ENCODE measurements at regions of chr19 and their contacts with region 1.

Region 1: GRCh38 chr19:33186431-33187182 is 7.5 kb upstream of the LRP3 start:
- DNase-seq: no peak
- H3K4me3 ChIP-seq: no peak overlapping the region
- H3K27ac ChIP-seq: no peak overlapping the region
- H3K4me1 ChIP-seq: peaks cover 4% of the 10 kb centered on the region
- H3K27me3 ChIP-seq: no peaks in the 10 kb centered on the region
- CTCF ChIP-seq: no peak

Region 2: GRCh38 chr19:32971715-32972540 is 214.7 kb before region 1 on chr19 and contains the starts of genes CEP89 and FAAP24:
- CTCF ChIA-PET with region 1: interaction called, 3 read pairs
- POLR2A ChIA-PET with region 1: no interaction called
- intact Hi-C with region 1: loop called (anchors 10 kb)
- DNase-seq: peak; percentile 99
- H3K4me3 ChIP-seq: peak within 1 kb of the TSS; percentile 72
- H3K27ac ChIP-seq: peak within 1 kb of the TSS; percentile 63
- H3K4me1 ChIP-seq: peaks cover 7% of the 10 kb centered on the region
- H3K27me3 ChIP-seq: no peaks in the 10 kb centered on the region
- CTCF ChIP-seq: no peak
- total RNA-seq, gene CEP89: 38.7 and 47.2 TPM in 2 replicates
- total RNA-seq, gene FAAP24: 10.0 and 11.1 TPM in 2 replicates

Region 3: DNA sequence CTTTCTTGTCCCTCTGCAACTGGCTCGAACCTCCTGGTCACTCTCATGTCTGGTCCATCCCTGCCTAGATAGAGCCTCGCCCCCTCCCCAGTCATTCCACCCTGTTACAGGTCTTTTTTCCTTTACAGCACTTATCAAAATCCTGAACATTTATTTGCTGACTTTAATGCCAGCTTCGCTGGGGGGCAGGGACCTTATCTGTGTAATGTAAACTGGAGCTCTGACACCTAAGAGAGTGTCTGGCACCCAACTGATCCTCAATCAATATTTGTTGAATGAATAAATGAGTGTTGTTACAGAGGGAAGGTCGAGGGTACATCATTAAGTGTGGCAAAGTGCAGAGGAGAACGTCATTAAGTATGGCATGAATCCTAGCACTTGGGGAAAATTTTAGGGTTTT is 197.9 kb before region 1 on chr19:
- CTCF ChIA-PET with region 1: no interaction called
- POLR2A ChIA-PET with region 1: no interaction called
- intact Hi-C with region 1: no loop called
- DNase-seq: no peak
- H3K4me3 ChIP-seq: no peak overlapping the region
- H3K27ac ChIP-seq: no peak overlapping the region
- H3K4me1 ChIP-seq: no peaks in the 10 kb centered on the region
- H3K27me3 ChIP-seq: no peaks in the 10 kb centered on the region
- CTCF ChIP-seq: no peak

Region 4: GRCh38 chr19:33047406-33047805 is 139.2 kb before region 1 on chr19:
- CTCF ChIA-PET with region 1: interaction called, 11 read pairs
- POLR2A ChIA-PET with region 1: no interaction called
- intact Hi-C with region 1: no loop called
- DNase-seq: no peak
- H3K4me3 ChIP-seq: no peak overlapping the region
- H3K27ac ChIP-seq: no peak overlapping the region
- H3K4me1 ChIP-seq: peaks cover under 1% of the 10 kb centered on the region
- H3K27me3 ChIP-seq: no peaks in the 10 kb centered on the region
- CTCF ChIP-seq: no peak

Region 5: DNA sequence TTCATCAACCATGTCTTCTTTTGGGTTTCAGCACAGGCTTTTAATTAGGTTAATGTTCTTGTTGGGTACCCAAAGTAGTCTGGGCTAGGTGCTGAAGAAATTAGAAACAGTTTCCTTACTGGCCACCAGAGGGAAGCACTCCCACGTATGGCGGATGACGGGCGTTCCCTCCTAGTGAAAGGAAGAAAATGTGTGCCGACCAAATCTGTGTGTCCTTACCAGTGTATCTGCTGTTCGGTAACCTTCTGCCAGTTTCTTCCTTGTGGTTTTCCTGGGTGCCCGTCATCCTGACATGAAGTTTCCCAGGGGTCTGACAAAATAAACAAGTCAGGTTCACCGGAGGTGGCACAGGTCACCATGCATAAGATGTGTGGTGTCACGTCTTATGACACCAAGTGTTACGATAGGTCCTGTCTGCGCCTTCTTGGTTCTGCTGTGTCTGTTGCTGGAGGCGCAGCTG is 60.6 kb before region 1 on chr19:
- CTCF ChIA-PET with region 1: interaction called, 17 read pairs
- POLR2A ChIA-PET with region 1: no interaction called
- intact Hi-C with region 1: loop called (anchors 1 kb)
- DNase-seq: peak; percentile 75
- H3K4me3 ChIP-seq: no peak overlapping the region
- H3K27ac ChIP-seq: no peak overlapping the region
- H3K4me1 ChIP-seq: no peaks in the 10 kb centered on the region
- H3K27me3 ChIP-seq: no peaks in the 10 kb centered on the region
- CTCF ChIP-seq: peak; percentile 85

Region 6: GRCh38 chr19:33143897-33144405 is 42.7 kb before region 1 on chr19:
- CTCF ChIA-PET with region 1: interaction called, 16 read pairs
- POLR2A ChIA-PET with region 1: no interaction called
- intact Hi-C with region 1: no loop called
- DNase-seq: peak; percentile 68
- H3K4me3 ChIP-seq: no peak overlapping the region
- H3K27ac ChIP-seq: no peak overlapping the region
- H3K4me1 ChIP-seq: no peaks in the 10 kb centered on the region
- H3K27me3 ChIP-seq: no peaks in the 10 kb centered on the region
- CTCF ChIP-seq: peak; percentile 95

Region 7: DNA sequence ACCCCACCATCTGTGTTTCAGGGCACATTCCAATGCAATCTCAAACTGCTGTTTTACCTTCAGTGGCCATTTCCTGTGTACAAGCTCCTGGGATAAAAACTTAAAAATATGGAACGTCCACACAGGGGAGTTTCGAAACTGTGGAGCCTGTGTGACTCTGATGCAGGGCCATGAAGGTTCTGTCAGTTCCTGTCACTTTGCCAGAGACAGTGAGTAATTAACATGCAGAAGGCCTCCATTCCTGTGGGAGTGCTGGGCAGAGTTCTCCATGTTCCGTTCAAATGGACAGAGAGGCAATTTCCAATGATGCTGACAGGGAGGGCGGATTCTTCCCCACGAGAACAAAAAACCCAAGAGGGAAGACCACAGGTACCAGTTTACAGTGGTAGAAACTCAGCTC is 30.3 kb before region 1 on chr19:
- CTCF ChIA-PET with region 1: no interaction called
- POLR2A ChIA-PET with region 1: no interaction called
- intact Hi-C with region 1: no loop called
- DNase-seq: no peak
- H3K4me3 ChIP-seq: no peak overlapping the region
- H3K27ac ChIP-seq: no peak overlapping the region
- H3K4me1 ChIP-seq: no peaks in the 10 kb centered on the region
- H3K27me3 ChIP-seq: no peaks in the 10 kb centered on the region
- CTCF ChIP-seq: no peak

Region 8: GRCh38 chr19:33273881-33274682 is 87.5 kb after region 1 on chr19:
- CTCF ChIA-PET with region 1: no interaction called
- POLR2A ChIA-PET with region 1: no interaction called
- intact Hi-C with region 1: no loop called
- DNase-seq: peak; percentile 70
- H3K4me3 ChIP-seq: no peak overlapping the region
- H3K27ac ChIP-seq: no peak overlapping the region
- H3K4me1 ChIP-seq: peaks cover 6% of the 10 kb centered on the region
- H3K27me3 ChIP-seq: no peaks in the 10 kb centered on the region
- CTCF ChIP-seq: no peak

Region 9: DNA sequence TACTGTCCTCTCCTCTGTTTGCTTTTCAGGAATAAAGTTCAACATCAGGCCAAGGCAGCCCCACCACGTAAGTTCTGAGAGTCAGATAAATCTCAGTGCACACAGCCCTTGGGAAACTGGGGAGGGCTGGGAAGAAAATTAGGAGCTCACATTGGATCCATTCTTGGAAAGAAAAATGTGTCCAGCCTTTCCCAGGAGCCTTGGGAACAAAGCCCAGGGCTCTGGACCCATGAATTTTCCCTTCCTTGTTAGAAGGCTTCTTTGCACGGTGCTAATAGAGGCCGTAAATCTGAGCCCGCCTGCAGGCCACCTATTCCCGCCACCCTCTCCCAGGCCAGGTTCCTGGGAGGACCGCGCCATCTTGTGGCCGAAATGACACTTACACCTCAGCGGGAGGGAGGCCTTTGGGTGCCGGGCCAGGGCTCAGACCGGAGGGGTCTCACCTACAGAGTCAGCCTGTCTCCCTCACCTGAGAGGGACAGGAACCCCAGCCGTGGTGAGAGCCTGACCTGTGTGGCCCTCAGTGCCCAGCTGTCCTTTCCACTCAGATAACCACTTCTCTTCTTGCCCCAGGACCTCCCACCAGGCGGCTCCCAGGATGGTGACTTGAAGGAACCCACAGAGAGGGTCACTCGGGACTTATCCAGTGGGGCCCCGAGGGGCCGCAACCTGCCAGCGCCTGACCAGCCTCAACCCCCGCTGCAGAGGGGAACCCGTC is 584.9 kb after region 1 on chr19:
- CTCF ChIA-PET with region 1: interaction called, 16 read pairs
- POLR2A ChIA-PET with region 1: no interaction called
- intact Hi-C with region 1: no loop called
- DNase-seq: peak; percentile 77
- H3K4me3 ChIP-seq: no peak overlapping the region
- H3K27ac ChIP-seq: no peak overlapping the region
- H3K4me1 ChIP-seq: no peaks in the 10 kb centered on the region
- H3K27me3 ChIP-seq: no peaks in the 10 kb centered on the region
- CTCF ChIP-seq: peak; percentile 87

Measured in A673 (cell line).